Activated naive CD4-positive, alpha-beta T cell treated with anti-CD3 and anti-CD28 coated beads for 36 hours (primary cell): ENCODE measurements at regions of chr2 and their contacts with region 1.

Region 1: DNA sequence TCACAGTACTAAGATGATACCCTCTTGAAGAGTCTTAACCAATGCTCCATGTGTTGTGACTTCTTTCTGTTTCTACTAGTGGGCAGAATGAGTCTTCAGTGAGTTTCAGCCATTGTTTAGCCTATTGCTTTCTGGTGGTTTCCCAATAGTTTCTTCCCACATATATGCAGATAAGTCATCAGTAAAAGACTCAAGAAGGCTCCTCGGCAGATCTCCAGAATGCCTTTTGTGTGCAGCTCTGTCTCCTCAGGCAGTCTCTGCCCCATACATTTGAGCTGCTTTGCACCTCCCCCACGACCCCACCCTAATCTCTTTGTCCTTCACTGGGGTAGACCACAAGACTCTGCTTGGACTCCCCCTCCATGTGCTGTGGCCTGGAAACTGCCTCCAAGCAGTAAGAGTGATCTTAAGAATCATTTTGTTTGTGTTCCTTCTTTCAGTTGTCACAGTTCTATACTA is 71.6 kb upstream of the CHRNA1 start:
- DNase-seq: peak; percentile 38
- H3K4me3 Mint-ChIP-seq: peak overlapping the region; percentile 36
- H3K27ac Mint-ChIP-seq: peak overlapping the region; percentile 71
- H3K4me1 Mint-ChIP-seq: peaks cover 32% of the 10 kb centered on the region
- H3K27me3 Mint-ChIP-seq: no peaks in the 10 kb centered on the region

Region 2: GRCh38 chr2:174673876-174674275 is 161.9 kb before region 1 on chr2:
- CTCF ChIA-PET with region 1: no interaction called
- intact Hi-C with region 1: no loop called
- DNase-seq: no peak
- H3K4me3 Mint-ChIP-seq: no peak overlapping the region
- H3K27ac Mint-ChIP-seq: no peak overlapping the region
- H3K4me1 Mint-ChIP-seq: peaks cover 33% of the 10 kb centered on the region
- H3K27me3 Mint-ChIP-seq: no peaks in the 10 kb centered on the region

Region 3: DNA sequence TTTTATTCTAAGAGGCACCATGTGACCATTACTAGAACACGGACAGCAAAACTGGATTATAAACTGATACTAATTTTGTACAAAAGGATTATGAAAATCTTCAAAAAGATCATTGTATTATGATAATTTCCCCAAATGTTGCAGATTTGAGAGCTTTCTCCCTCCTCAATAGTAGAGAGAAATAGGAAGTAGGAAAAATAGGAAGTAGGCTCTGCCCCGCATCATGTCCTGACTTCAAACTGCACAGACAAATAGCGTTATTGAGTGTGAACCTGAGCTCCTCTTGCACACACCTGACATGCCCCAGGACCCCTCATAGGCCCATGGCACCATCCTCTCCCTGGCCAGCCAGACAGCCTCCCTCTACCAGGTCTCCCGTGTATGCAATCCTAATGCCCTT is 97.0 kb before region 1 on chr2:
- CTCF ChIA-PET with region 1: no interaction called
- intact Hi-C with region 1: no loop called
- DNase-seq: no peak
- H3K4me3 Mint-ChIP-seq: no peak overlapping the region
- H3K27ac Mint-ChIP-seq: no peak overlapping the region
- H3K4me1 Mint-ChIP-seq: no peaks in the 10 kb centered on the region
- H3K27me3 Mint-ChIP-seq: no peaks in the 10 kb centered on the region

Region 4: GRCh38 chr2:174794851-174795374 is 40.9 kb before region 1 on chr2:
- CTCF ChIA-PET with region 1: no interaction called
- intact Hi-C with region 1: loop called (anchors 1 kb)
- DNase-seq: peak; percentile 34
- H3K4me3 Mint-ChIP-seq: no peak overlapping the region
- H3K27ac Mint-ChIP-seq: no peak overlapping the region
- H3K4me1 Mint-ChIP-seq: peaks cover 19% of the 10 kb centered on the region
- H3K27me3 Mint-ChIP-seq: peaks cover 4% of the 10 kb centered on the region

Region 5: DNA sequence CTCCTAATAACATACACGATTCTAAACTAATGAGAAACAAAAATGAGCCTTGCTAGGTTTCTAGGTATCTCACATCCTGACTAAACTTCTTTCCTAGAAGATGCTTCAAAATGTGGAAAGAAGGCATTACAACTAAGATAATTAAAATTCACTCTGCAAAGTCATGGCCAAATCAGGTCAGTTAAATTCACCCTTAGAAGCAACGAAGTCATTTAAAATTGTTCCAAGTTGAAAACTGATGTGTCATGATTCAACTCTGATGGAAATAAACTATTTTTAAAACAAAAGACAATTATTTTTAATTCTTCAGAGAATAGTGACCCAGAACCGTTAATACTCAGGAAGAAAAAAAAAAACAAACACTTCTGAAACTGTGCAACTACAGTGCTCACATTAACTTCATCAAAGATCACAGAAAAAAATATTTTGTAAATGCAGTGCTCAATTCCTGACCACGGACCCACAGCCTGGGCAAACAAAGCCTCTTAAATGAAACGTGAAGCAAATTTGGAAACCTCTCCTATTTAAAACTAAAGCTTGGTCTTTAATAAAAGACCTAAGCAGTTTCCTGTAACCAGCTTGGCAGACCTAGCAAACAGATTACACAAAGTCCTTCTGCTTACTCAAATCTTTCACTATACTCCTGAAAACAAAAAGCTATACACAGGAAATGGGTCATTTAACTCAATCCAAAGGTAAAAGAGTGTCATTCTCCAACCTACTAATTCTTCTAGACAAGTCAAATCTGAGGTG is 130.3 kb after region 1 on chr2:
- CTCF ChIA-PET with region 1: interaction called, 3 read pairs
- intact Hi-C with region 1: loop called (anchors 1 kb)
- DNase-seq: no peak
- H3K4me3 Mint-ChIP-seq: no peak overlapping the region
- H3K27ac Mint-ChIP-seq: no peak overlapping the region
- H3K4me1 Mint-ChIP-seq: peaks cover 13% of the 10 kb centered on the region
- H3K27me3 Mint-ChIP-seq: no peaks in the 10 kb centered on the region

Region 6: DNA sequence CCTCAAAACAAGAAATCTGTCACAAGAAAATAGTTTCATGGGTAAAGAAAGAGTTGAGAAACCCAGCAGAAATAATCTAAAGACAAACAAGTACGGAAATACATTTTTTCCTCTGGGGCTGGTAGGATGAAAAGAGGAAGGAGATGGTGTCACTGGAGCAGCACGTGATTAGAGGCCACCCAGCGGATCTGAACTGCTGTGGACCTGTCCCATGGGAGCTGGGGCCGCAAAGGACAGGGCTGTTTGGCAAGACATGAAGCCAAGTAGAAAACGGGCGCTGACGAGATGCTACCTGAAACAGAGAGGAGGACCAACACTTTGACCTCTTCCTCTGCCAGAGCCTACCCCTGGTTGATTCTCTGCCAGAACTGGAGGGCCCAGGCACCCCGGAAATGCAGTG is 641.1 kb after region 1 on chr2:
- CTCF ChIA-PET with region 1: no interaction called
- intact Hi-C with region 1: no loop called
- DNase-seq: no peak
- H3K4me3 Mint-ChIP-seq: no peak overlapping the region
- H3K27ac Mint-ChIP-seq: no peak overlapping the region
- H3K4me1 Mint-ChIP-seq: no peaks in the 10 kb centered on the region
- H3K27me3 Mint-ChIP-seq: no peaks in the 10 kb centered on the region